Activated CD4-positive, alpha-beta memory T cell treated with anti-CD3 and anti-CD28 coated beads for 36 hours (primary cell): ENCODE measurements at regions of chr10 and their contacts with region 1.

Region 1: GRCh38 chr10:73810735-73811465 is 498 bp downstream of the NDST2 start:
- DNase-seq: peak; percentile 68
- H3K4me3 Mint-ChIP-seq: peak overlapping the region; percentile 85
- H3K27ac Mint-ChIP-seq: peak overlapping the region; percentile 95
- H3K4me1 Mint-ChIP-seq: peaks cover 41% of the 10 kb centered on the region
- H3K27me3 Mint-ChIP-seq: no peaks in the 10 kb centered on the region

Region 2: GRCh38 chr10:73501651-73502050 is 309.2 kb before region 1 on chr10:
- CTCF ChIA-PET with region 1: no interaction called
- POLR2A ChIA-PET with region 1: no interaction called
- intact Hi-C with region 1: no loop called
- DNase-seq: no peak
- H3K4me3 Mint-ChIP-seq: no peak overlapping the region
- H3K27ac Mint-ChIP-seq: peak overlapping the region; percentile 55
- H3K4me1 Mint-ChIP-seq: peaks cover 24% of the 10 kb centered on the region
- H3K27me3 Mint-ChIP-seq: no peaks in the 10 kb centered on the region

Region 3: DNA sequence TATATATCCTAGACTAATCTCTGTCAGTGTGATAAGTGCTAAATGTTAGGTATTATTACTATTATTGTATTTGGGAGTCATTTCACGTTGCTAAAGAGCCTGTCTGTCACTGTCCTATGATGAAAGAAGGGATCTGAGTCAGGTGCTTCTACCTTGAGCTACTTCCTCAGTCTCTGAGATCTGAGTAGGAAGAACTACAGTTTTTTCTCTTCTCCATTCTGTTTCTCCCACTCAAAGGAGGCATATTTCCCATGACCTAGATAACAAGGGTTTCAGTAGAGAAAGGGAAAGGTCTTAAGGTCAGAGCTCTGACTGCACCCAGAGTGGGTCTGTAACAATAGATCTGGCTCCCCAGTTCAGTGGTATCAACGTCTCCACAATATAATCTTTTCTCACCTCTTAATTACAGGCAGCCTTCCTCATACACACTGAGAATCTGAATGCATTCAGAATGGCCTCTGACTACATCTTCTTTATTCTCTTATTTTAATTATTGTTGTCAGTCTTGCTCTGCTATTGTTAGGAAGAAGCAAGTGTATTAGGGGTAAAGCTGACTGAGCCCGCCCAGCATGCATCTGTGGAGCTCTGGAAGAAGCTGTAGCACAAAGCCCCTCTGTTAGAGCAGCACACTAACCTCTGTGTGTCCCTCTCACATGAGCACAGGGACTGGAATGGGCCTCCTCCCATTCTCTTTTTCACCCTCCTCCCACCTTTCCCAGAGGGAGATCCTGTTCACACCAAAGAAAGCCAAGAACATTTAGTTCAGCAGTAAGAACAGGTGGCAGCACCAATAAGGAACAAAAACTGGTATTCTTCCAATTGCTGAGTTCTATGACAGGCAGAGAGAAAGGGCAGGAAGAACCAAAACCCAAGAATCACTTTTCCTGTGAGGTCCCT is 257.8 kb before region 1 on chr10:
- CTCF ChIA-PET with region 1: no interaction called
- POLR2A ChIA-PET with region 1: no interaction called
- intact Hi-C with region 1: no loop called
- DNase-seq: no peak
- H3K4me3 Mint-ChIP-seq: no peak overlapping the region
- H3K27ac Mint-ChIP-seq: no peak overlapping the region
- H3K4me1 Mint-ChIP-seq: no peaks in the 10 kb centered on the region
- H3K27me3 Mint-ChIP-seq: no peaks in the 10 kb centered on the region

Region 4: GRCh38 chr10:73785221-73785720 is 25.6 kb before region 1 on chr10 and contains the start of gene ZSWIM8:
- CTCF ChIA-PET with region 1: interaction called, 4 read pairs
- POLR2A ChIA-PET with region 1: interaction called, 22 read pairs
- intact Hi-C with region 1: loop called (anchors 1 kb)
- DNase-seq: peak; percentile 90
- H3K4me3 Mint-ChIP-seq: peak within 1 kb of the TSS; percentile 98
- H3K27ac Mint-ChIP-seq: peak within 1 kb of the TSS; percentile 96
- H3K4me1 Mint-ChIP-seq: peaks cover 40% of the 10 kb centered on the region
- H3K27me3 Mint-ChIP-seq: no peaks in the 10 kb centered on the region
- total RNA-seq, gene ZSWIM8: 45.1 to 46.2 TPM

Region 5: GRCh38 chr10:73874267-73875138 is 63.6 kb after region 1 on chr10 and contains the start of gene CAMK2G:
- CTCF ChIA-PET with region 1: interaction called, 22 read pairs
- POLR2A ChIA-PET with region 1: no interaction called
- intact Hi-C with region 1: loop called (anchors 2 kb)
- DNase-seq: peak; percentile 89
- H3K4me3 Mint-ChIP-seq: peak within 1 kb of the TSS; percentile 78
- H3K27ac Mint-ChIP-seq: peak within 1 kb of the TSS; percentile 66
- H3K4me1 Mint-ChIP-seq: peaks cover 54% of the 10 kb centered on the region
- H3K27me3 Mint-ChIP-seq: no peaks in the 10 kb centered on the region
- total RNA-seq, gene CAMK2G: 20.8 to 21.5 TPM

Region 6: DNA sequence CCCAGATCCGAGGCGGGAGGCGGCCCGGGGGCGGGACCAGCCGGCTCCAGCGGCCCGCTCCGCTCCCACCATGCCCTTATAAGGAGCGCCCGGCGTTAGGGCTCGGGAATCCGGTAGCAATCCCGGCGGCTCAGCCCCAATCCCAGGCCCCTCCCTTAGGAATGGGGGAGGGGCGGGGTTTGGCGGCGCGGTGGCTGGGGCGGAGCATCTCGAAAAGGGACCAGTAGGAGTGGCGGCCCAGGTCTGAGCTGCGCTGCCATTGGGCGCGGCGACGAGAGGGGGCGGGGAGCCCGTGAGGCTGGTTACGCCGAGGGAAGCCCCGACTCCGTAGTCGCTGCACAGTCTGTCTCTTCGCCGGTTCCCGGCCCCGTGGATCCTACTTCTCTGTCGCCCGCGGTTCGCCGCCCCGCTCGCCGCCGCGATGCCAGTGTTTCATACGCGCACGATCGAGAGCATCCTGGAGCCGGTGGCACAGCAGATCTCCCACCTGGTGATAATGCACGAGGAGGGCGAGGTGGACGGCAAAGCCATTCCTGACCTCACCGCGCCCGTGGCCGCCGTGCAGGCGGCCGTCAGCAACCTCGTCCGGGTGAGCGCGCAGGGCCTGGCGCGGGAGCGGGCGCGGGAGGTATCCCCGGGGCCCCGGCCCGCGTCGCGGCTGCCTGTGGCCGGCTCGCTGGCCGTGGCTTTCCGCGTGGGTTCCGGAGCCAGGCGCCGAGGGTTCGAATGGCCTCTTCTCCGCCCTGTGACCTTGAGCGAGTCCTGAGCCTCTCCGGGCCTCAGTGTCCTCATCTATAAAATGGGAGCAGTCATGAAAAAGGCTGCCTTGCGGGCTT is 187.1 kb after region 1 on chr10 and contains the start of gene VCL:
- CTCF ChIA-PET with region 1: no interaction called
- POLR2A ChIA-PET with region 1: no interaction called
- intact Hi-C with region 1: loop called (anchors 5 kb)
- DNase-seq: peak; percentile 97
- H3K4me3 Mint-ChIP-seq: peak within 1 kb of the TSS; percentile 91
- H3K27ac Mint-ChIP-seq: peak within 1 kb of the TSS; percentile 89
- H3K4me1 Mint-ChIP-seq: peaks cover 33% of the 10 kb centered on the region
- H3K27me3 Mint-ChIP-seq: no peaks in the 10 kb centered on the region
- total RNA-seq, gene VCL: 27.8 to 29.2 TPM